ENCODE measurements at regions of chr4 and their contacts with region 1.

Region 1: DNA sequence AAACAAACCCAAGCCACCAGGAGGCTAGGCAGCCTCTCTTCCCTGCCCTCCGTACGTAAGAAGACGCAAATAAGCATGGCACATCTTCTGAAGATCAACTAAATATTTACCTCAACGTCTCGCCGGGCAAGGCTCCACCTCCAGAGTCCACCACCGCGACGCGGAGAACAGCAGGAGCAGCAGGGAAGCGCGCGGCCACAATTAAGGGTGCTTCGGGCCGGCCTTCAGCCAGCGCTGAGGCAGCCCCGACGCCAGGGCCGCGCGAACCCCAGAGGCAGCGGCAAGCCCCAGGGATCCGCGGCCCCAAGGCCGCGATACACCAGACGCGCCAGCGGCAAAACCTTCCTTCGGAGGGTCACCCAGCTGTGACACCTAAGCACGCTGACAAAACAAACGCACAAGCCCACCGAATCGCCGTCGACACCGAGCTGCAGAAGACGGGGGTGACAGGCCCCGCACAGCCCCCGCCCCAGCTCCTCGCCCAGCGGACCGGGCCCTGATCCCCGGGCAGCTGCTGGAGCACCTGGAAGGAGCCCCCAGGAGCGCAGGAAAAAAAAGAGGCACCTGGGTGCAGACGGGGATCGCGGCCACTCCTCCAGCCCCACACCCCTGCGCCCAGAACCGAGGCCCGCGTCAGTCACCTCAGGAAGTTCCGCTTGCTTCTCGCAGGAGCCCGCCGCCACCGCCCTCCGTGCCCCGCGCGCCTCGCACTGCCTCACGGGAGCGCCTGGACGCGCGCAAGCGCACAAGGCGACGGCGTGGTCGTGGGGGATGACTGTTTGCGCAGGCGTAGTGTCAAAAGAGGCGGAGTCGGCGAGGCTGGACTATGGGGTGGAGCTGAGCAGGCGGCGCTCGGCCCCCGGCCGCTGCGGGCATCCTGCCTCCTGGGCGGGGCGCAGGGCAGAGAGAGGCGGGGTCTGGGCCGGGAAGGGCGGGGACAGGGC is at the starts of genes HAUS3 and POLN:
- DNase-seq: peak; percentile 99
- H3K4me3 Mint-ChIP-seq: peak within 1 kb of the TSS; percentile 87
- H3K27ac Mint-ChIP-seq: peak within 1 kb of the TSS; percentile 84
- H3K4me1 Mint-ChIP-seq: peaks cover 52% of the 10 kb centered on the region
- H3K27me3 Mint-ChIP-seq: no peaks in the 10 kb centered on the region
- total RNA-seq, gene HAUS3: 18.0 to 18.1 TPM
- total RNA-seq, gene POLN: 0.91 to 1.3 TPM

Region 2: GRCh38 chr4:1870578-1871443 is 370.9 kb before region 1 on chr4 and contains the start of gene NSD2:
- CTCF ChIA-PET with region 1: no interaction called
- intact Hi-C with region 1: loop called (anchors 5 kb)
- DNase-seq: peak; percentile 90
- H3K4me3 Mint-ChIP-seq: peak within 1 kb of the TSS; percentile 92
- H3K27ac Mint-ChIP-seq: peak within 1 kb of the TSS; percentile 96
- H3K4me1 Mint-ChIP-seq: peaks cover 35% of the 10 kb centered on the region
- H3K27me3 Mint-ChIP-seq: no peaks in the 10 kb centered on the region
- total RNA-seq, gene NSD2: 246 to 250 TPM

Region 3: DNA sequence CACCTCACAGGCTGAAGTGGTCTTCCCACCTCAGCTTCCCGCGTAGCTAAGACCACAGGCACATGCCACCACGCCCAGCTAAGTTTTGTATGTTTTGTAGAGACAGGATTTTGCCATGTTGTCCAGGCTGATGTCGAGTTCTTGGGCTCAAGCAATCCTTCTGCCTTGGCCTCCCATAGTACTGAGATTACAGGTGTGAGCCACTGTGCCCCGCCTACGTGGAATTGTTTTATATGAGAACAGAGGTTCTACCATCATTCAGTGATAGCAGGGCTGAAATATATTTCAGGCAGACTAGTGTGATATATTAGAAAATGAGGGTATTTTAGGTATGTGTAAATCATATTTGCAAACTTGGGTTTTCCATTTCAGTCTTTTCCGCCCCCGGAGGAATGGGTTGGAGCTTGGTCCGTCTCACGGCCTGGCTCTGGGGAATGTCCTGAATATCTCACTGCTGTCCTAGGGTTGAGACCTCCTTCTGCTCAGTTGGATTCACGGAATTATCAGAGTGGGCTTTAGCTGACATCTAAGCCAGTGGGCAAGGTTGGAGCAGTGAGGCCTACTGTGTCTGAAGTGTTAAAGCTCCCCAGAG is 350.6 kb before region 1 on chr4:
- CTCF ChIA-PET with region 1: no interaction called
- intact Hi-C with region 1: no loop called
- DNase-seq: no peak
- H3K4me3 Mint-ChIP-seq: no peak overlapping the region
- H3K27ac Mint-ChIP-seq: no peak overlapping the region
- H3K4me1 Mint-ChIP-seq: peaks cover 13% of the 10 kb centered on the region
- H3K27me3 Mint-ChIP-seq: no peaks in the 10 kb centered on the region

Region 4: DNA sequence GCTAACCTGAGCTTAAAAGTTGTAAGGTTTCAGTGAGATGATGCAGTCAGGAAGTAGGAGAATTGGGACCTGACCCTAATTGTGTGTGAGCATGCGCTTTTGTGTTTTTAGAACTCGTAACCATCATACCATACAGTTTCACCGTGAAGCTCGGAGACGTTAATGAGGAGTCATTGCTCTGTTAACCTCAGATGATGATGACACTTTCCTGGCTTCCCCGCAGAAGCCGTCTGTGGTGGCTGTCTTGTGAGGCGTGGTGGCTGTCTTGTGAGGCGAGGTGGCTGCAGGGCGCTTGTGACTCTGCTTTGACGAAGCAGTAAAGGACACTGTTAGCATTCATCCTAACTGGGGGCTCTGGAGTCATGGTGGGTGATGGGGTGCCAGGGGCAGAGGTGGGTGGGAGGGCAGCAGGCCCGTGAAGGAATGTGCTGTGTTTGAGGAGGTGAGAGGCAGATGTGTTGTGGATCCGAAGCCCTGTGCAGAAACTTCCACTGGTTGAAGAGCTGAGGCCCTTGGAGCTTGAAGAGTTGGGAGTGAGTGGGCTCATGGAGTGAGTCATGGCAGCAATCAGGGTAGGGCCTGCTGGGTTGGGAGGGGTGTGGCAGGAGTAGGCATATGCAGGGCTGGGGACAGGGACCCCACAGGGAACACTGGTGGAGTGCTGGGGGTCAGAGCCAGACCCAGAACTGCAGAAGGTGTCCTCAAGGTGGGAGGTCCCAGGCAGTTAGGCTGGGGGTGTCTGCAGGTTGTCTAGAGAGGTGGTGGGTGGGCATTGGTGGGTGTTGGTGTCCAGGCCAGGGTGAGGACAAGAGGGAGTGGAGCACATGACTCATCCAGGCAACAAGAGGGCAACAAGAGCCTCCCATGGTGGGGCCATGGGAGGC is 313.1 kb before region 1 on chr4:
- CTCF ChIA-PET with region 1: no interaction called
- intact Hi-C with region 1: no loop called
- DNase-seq: no peak
- H3K4me3 Mint-ChIP-seq: no peak overlapping the region
- H3K27ac Mint-ChIP-seq: no peak overlapping the region
- H3K4me1 Mint-ChIP-seq: no peaks in the 10 kb centered on the region
- H3K27me3 Mint-ChIP-seq: no peaks in the 10 kb centered on the region

Region 5: GRCh38 chr4:2212831-2213230 is 28.9 kb before region 1 on chr4:
- CTCF ChIA-PET with region 1: no interaction called
- intact Hi-C with region 1: no loop called
- DNase-seq: no peak
- H3K4me3 Mint-ChIP-seq: no peak overlapping the region
- H3K27ac Mint-ChIP-seq: no peak overlapping the region
- H3K4me1 Mint-ChIP-seq: no peaks in the 10 kb centered on the region
- H3K27me3 Mint-ChIP-seq: no peaks in the 10 kb centered on the region

Region 6: DNA sequence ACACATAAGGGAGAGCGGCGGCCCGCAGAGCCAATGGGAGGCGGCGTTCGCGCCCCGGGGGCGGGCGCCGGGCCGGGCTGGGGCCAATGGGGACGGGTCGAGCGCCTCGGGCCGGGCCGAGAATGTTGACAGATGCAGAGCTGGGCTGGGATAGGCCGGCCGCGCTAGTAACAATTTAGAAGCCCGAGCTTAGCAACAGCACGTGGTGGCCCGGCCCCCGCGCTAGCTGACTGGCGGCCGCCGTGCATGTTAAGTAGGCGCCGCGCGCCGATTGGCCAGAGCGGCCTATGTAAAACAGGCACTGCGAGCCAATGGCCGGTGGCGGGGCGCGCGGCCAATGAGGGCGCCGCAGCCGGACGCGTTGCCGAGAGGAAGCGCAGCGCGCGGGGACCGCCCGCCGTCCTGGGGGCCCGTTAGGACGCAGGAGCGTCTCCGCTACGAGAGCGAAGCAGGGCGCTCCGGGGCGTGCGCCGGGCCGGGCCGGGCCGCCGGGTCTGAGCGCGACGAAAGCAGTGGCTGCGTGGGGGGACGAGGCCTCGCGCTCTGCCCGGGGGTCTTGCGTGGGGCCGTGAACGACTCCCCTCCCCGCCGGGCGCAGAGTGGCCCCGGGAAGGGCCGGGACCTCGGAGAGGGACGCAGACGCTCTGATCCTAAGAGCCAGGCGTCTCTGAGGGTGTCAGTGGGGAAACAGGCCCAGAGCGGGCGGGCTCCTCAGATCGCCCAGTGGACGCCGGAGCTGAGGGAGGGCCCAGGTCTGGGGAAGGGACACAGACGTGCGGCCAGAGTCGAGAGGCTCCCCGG is 20.7 kb after region 1 on chr4:
- CTCF ChIA-PET with region 1: no interaction called
- intact Hi-C with region 1: loop called (anchors 1 kb)
- DNase-seq: peak; percentile 98
- H3K4me3 Mint-ChIP-seq: peak overlapping the region; percentile 69
- H3K27ac Mint-ChIP-seq: no peak overlapping the region
- H3K4me1 Mint-ChIP-seq: peaks cover 2% of the 10 kb centered on the region
- H3K27me3 Mint-ChIP-seq: no peaks in the 10 kb centered on the region

Region 7: GRCh38 chr4:2354118-2354517 is 112.4 kb after region 1 on chr4:
- CTCF ChIA-PET with region 1: no interaction called
- intact Hi-C with region 1: no loop called
- DNase-seq: peak; percentile 18
- H3K4me3 Mint-ChIP-seq: no peak overlapping the region
- H3K27ac Mint-ChIP-seq: no peak overlapping the region
- H3K4me1 Mint-ChIP-seq: peaks cover 3% of the 10 kb centered on the region
- H3K27me3 Mint-ChIP-seq: no peaks in the 10 kb centered on the region

Region 8: DNA sequence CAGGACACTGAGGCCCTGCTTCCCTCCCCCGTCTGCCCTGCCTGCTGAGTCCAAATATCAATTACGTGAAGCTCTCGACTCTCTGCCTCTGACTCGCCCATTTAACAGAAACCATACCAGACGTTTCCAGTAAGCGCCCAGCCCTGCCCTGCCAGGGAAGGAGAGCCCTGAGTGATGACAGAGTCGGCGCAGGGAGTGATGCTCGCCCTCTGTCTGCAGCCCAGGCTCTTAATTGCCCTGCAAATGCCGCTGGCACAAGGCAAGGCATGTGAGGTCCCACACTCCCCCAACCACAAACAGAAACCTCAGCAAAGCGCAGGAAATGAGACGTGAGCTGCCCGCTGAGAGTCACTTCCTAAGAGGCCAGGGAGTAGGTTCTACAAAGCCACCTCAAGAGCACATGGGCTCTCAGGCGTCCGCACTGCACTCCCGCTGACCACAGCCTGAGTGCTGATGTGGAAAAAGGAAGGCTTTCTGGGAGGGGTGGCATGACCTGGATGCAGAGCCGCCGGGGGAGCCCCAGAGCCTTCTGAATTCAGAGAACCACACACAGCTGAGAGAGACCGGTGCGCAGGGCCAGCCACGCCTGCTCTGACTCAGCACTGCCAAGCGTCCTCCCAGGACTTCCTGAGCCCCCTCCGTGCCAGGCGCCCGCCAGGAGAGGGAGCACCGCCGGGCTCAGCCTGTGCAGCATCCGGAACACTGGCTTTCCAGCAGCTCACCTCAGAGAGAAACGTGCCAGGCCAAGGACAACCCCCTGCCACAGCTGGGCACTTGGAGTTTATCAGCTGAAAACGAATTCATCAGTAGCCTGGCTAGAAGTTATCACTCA is 171.4 kb after region 1 on chr4:
- CTCF ChIA-PET with region 1: no interaction called
- intact Hi-C with region 1: loop called (anchors 1 kb)
- DNase-seq: peak; percentile 94
- H3K4me3 Mint-ChIP-seq: peak overlapping the region; percentile 63
- H3K27ac Mint-ChIP-seq: peak overlapping the region; percentile 96
- H3K4me1 Mint-ChIP-seq: peaks cover 54% of the 10 kb centered on the region
- H3K27me3 Mint-ChIP-seq: peaks cover 15% of the 10 kb centered on the region

Region 9: GRCh38 chr4:2536193-2537010 is 294.7 kb after region 1 on chr4 and contains the start of gene FAM193A:
- CTCF ChIA-PET with region 1: no interaction called
- intact Hi-C with region 1: loop called (anchors 1 kb)
- DNase-seq: peak; percentile 99
- H3K4me3 Mint-ChIP-seq: peak within 1 kb of the TSS; percentile 86
- H3K27ac Mint-ChIP-seq: peak within 1 kb of the TSS; percentile 83
- H3K4me1 Mint-ChIP-seq: peaks cover 18% of the 10 kb centered on the region
- H3K27me3 Mint-ChIP-seq: no peaks in the 10 kb centered on the region
- total RNA-seq, gene FAM193A: 20.1 to 20.4 TPM